Activated CD8-positive, alpha-beta T cell treated with anti-CD3 and anti-CD28 coated beads for 36 hours (primary cell): ENCODE measurements at regions of chr3 and their contacts with region 1.

Region 1: DNA sequence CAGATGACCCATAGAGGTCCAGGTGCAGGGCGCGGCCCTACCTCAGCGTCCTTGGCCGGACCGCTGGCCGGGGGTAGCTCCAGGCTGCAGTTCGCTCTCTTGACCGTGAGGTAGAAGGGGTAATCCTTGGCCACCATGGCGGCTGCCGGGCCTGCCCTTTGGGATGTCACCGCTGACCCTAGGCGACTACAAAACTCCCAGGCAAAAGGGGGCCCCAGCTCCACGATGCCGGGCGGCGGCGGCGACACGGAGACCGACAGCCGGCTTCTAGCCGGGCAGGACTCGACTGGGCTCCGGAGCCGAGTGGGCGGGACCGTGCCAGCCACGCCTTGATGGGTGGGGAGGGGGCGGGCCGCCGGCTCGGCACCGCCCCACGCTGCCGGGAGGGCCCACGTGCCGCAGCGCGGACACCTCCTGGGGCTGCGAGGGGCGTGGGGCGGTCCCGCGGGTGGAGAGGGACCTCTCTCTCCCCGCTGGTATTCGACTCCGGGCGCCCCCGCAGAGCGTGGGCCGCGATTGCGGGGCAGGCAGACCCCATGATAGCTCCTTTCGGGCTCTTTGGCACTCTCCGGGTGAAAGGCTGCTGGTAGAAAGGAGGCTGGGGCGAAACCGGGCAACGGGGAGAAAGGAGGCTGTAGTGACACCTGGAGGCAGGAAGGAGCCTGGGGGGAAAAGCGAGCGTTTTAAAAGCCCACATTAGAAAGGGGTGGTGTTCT is at the start of gene ARHGEF3:
- DNase-seq: peak; percentile 89
- ATAC-seq: peak; percentile 82
- H3K4me3 Mint-ChIP-seq: peak within 1 kb of the TSS; percentile 87
- H3K27ac Mint-ChIP-seq: peak within 1 kb of the TSS; percentile 91
- H3K4me1 Mint-ChIP-seq: peaks cover 24% of the 10 kb centered on the region
- H3K27me3 Mint-ChIP-seq: no peaks in the 10 kb centered on the region
- CTCF ChIP-seq: peak; percentile 61
- total RNA-seq, gene ARHGEF3: 63.0 to 66.5 TPM

Region 2: DNA sequence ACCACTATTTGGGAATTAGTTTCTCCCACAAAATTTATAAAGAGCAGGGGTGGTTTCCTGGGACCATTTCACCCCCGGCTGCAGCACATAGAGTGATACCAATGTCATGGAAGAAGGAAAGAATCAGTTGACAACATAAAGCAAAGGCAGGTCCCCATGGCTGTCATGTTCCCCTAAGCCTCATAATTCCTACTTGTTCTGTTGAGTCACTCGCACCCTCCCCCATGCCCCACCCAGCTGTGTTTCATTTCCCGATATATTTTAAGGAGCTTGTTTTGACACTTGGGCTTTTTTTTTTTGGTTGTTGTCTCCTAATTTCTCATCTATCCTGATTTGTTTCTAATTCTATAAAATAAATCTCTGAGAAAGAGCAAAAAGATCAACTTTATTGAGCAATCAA is 358.4 kb before region 1 on chr3:
- CTCF ChIA-PET with region 1: no interaction called
- POLR2A ChIA-PET with region 1: no interaction called
- intact Hi-C with region 1: no loop called
- DNase-seq: no peak
- ATAC-seq: no peak
- H3K4me3 Mint-ChIP-seq: no peak overlapping the region
- H3K27ac Mint-ChIP-seq: no peak overlapping the region
- H3K4me1 Mint-ChIP-seq: no peaks in the 10 kb centered on the region
- H3K27me3 Mint-ChIP-seq: peaks cover 6% of the 10 kb centered on the region
- CTCF ChIP-seq: no peak

Region 3: GRCh38 chr3:56702490-56703315 is 99.1 kb before region 1 on chr3:
- CTCF ChIA-PET with region 1: interaction called, 242 read pairs
- POLR2A ChIA-PET with region 1: interaction called, 23 read pairs
- intact Hi-C with region 1: loop called (anchors 2 kb)
- DNase-seq: peak; percentile 68
- ATAC-seq: peak; percentile 65
- H3K4me3 Mint-ChIP-seq: no peak overlapping the region
- H3K27ac Mint-ChIP-seq: no peak overlapping the region
- H3K4me1 Mint-ChIP-seq: peaks cover 22% of the 10 kb centered on the region
- H3K27me3 Mint-ChIP-seq: no peaks in the 10 kb centered on the region
- CTCF ChIP-seq: peak; percentile 96

Region 4: DNA sequence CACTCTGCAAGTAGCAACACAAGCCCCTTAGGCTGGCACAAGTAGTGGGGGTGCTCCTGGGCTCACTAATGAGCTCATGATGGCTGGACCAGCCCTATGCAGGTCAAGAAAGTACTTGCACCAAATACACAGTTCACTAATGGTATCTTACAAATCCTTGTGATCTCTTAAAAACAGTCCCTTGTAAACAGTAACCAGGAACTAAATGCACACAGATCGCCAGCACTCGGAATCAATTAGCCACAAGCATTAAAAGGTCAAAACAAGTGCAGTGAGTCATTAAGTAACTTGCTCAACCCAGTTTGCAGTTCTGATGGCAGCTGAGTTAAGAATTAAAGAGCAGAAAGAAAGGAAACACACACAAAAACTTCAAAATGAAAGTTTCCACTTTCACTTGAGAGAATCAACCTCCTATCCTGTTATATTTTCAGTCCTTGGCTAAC is 43.3 kb before region 1 on chr3:
- CTCF ChIA-PET with region 1: interaction called, 127 read pairs
- POLR2A ChIA-PET with region 1: interaction called, 44 read pairs
- intact Hi-C with region 1: loop called (anchors 2 kb)
- DNase-seq: peak; percentile 74
- ATAC-seq: peak; percentile 74
- H3K4me3 Mint-ChIP-seq: peak overlapping the region; percentile 52
- H3K27ac Mint-ChIP-seq: peak overlapping the region; percentile 93
- H3K4me1 Mint-ChIP-seq: peaks cover 86% of the 10 kb centered on the region
- H3K27me3 Mint-ChIP-seq: no peaks in the 10 kb centered on the region
- CTCF ChIP-seq: no peak

Region 5: GRCh38 chr3:56790016-56790821 is 11.6 kb before region 1 on chr3:
- CTCF ChIA-PET with region 1: interaction called, 212 read pairs
- POLR2A ChIA-PET with region 1: interaction called, 44 read pairs
- intact Hi-C with region 1: no loop called
- DNase-seq: peak; percentile 55
- ATAC-seq: peak; percentile 57
- H3K4me3 Mint-ChIP-seq: peak overlapping the region; percentile 43
- H3K27ac Mint-ChIP-seq: peak overlapping the region; percentile 92
- H3K4me1 Mint-ChIP-seq: peaks cover 86% of the 10 kb centered on the region
- H3K27me3 Mint-ChIP-seq: no peaks in the 10 kb centered on the region
- CTCF ChIP-seq: no peak

Region 6: DNA sequence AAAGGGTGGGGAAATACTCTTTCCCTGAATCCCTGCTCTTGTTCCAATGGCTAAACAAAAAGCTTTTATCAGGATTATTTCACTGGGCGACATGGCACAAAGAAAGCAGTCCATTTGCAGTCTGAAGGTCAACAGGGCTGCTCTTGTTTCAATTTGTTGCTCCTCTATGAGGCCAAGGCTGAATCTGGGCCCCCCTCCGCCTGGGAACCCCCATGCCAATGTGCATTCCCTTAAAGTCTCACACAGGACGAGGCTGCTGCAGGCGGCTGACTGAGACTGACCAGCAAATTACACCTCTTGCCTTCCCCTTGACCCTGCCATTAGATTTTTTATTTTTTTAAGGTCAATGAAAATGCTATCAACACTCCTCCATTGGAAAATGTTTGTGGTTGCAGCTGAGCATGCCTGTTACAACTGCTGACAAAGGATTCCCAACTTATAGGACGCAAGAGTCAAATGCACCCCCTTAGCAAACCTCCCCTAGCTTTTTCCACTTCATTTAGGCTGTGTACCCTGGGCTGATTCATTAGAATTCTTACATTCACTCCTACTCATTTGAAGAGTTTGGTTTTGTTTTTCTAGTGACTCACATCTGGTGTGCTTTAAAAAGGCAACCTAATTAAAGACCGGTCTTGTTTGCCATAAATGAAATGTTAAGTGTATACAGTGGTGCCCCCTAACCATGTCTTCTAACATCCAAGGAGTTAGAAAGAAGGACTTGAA is 60.7 kb after region 1 on chr3:
- CTCF ChIA-PET with region 1: interaction called, 14 read pairs
- POLR2A ChIA-PET with region 1: interaction called, 3 read pairs
- intact Hi-C with region 1: loop called (anchors 5 kb)
- DNase-seq: peak; percentile 62
- ATAC-seq: peak; percentile 75
- H3K4me3 Mint-ChIP-seq: peak overlapping the region; percentile 28
- H3K27ac Mint-ChIP-seq: peak overlapping the region; percentile 87
- H3K4me1 Mint-ChIP-seq: peaks cover 75% of the 10 kb centered on the region
- H3K27me3 Mint-ChIP-seq: no peaks in the 10 kb centered on the region
- CTCF ChIP-seq: no peak

Region 7: DNA sequence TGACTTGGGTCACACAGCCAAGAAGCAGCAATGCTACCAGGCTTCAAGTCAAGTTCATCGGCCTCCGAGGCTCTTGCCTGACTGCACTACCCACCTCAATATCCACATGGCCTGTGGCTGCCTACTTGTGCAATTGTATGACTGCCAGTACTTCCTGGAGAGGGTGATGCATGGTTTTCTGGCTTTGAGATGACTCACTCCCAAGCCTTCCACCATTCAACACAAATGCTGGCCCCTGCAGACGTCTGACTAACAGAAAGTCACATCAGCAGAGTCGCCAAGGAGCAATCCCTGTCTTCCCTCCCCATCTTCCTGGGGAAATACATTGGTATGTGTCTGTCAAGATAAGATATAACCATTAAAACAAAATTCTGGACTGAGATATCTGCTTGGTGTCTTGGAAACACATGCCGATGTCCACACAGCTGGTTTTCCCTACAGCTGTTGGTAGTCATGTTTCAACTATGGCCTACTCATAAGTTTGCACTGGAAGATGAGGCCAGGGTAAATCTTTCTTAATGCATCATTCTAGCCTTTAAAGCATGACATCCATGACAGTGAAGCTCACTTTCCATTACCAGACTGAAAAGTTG is 179.1 kb after region 1 on chr3:
- CTCF ChIA-PET with region 1: interaction called, 354 read pairs
- POLR2A ChIA-PET with region 1: interaction called, 24 read pairs
- intact Hi-C with region 1: loop called (anchors 2 kb)
- DNase-seq: peak; percentile 83
- ATAC-seq: peak; percentile 96
- H3K4me3 Mint-ChIP-seq: no peak overlapping the region
- H3K27ac Mint-ChIP-seq: peak overlapping the region; percentile 43
- H3K4me1 Mint-ChIP-seq: peaks cover 35% of the 10 kb centered on the region
- H3K27me3 Mint-ChIP-seq: no peaks in the 10 kb centered on the region
- CTCF ChIP-seq: no peak